Endothelial cell of umbilical vein (primary cell): ENCODE measurements at regions of chr1 and their contacts with region 1.

Region 1: DNA sequence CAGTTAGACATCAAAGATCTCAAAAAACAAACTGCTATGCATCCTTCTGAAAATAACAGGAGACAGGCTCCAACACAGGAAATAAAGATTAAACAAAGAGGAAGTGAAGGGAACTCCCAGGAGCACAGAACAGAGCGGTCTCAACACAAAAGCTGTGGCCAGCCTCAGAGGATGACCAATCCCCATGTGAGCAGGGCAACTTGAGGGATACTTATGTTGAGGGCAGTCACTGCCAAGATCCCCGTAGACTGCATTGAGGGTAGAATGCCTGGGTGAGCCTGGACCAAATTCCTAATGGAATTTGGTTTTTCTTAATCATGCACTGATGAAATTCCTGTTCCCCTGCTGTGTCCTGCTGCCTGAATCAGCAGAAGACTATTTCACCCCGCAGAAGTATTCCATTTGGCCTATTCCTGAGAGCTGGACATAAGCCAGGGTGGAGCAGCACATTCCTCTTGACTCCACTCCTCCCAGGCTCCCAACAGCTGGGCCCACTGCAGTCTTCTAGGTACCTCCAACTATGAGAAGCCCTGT is 49.0 kb downstream of the JAK1 start:
- DNase-seq: peak; percentile 91
- H3K4me3 ChIP-seq: peak overlapping the region in 1 of 3 experiments; percentile 6
- H3K27ac ChIP-seq: peak overlapping the region; percentile 86
- H3K4me1 ChIP-seq: peaks cover 54% of the 10 kb centered on the region
- H3K27me3 ChIP-seq: no peaks in the 10 kb centered on the region
- CTCF ChIP-seq: no peak
- POLR2A ChIP-seq: no peak

Region 2: GRCh38 chr1:64572222-64572900 is 345.0 kb before region 1 on chr1:
- CTCF ChIA-PET with region 1: no interaction called
- POLR2A ChIA-PET with region 1: no interaction called
- dilution Hi-C with region 1: no loop called
- intact Hi-C with region 1: no loop called
- DNase-seq: no peak
- H3K4me3 ChIP-seq: no peak overlapping the region
- H3K27ac ChIP-seq: no peak overlapping the region
- H3K4me1 ChIP-seq: no peaks in the 10 kb centered on the region
- H3K27me3 ChIP-seq: no peaks in the 10 kb centered on the region
- CTCF ChIP-seq: no peak
- POLR2A ChIP-seq: no peak

Region 3: DNA sequence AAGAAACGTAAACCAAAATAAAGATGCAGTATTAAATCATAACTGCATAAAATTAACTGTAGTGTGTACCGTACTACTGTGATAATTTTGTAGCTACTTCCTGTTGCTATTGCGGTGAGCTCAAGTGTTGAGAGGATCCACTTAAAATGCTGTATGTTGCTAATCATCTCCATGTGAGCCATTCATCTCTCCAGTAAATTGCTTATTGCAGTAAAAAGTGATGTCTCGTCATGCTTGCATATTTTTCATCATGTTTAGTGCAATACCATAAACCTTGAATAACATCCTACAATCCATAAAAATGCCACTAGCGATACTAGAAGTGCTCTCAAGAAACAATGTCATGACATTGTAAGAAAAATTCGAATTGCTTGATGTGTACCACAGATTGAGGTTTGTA is 106.3 kb before region 1 on chr1:
- CTCF ChIA-PET with region 1: no interaction called
- POLR2A ChIA-PET with region 1: no interaction called
- dilution Hi-C with region 1: no loop called
- intact Hi-C with region 1: no loop called
- DNase-seq: no peak
- H3K4me3 ChIP-seq: no peak overlapping the region
- H3K27ac ChIP-seq: no peak overlapping the region
- H3K4me1 ChIP-seq: no peaks in the 10 kb centered on the region
- H3K27me3 ChIP-seq: no peaks in the 10 kb centered on the region
- CTCF ChIP-seq: no peak
- POLR2A ChIP-seq: no peak

Region 4: DNA sequence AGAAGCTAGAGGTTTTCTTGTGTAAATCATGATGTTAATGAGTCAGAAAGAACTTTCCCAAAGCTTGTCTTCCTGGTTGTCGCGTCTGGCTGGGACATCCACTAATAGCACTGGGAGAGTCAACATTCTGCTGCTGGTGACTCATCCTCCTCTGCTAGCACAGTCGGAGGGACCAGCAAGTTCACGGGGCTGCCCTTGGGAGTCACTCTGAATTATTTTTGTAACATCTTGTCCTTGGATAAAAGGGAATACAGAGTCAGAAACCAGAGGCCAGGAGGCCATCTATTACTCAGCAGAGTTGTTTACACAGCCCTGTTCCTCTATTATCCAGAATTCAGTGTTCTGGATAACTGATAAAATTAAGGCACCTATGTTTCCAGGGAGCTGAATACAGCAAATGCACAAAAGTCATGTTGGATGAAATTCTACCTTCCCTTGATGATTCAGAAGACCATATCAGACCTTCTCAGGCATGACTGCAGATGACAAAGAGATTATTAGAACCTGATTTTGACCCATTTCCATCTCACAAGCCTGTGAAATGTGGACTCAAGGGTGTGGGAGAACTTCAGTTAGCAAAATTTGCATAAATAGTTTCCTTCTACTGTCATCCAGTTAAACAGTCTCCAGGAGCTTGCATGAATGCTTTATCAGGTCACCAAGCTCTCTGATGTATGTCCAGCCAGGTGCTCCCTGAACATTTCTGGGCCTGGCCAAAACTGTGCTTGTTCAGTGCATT is 19.1 kb before region 1 on chr1:
- CTCF ChIA-PET with region 1: interaction called, 6 read pairs
- POLR2A ChIA-PET with region 1: interaction called, 4 read pairs
- dilution Hi-C with region 1: no loop called
- intact Hi-C with region 1: loop called (anchors 1 kb)
- DNase-seq: peak; percentile 98
- H3K4me3 ChIP-seq: peak overlapping the region in 1 of 3 experiments; percentile 32
- H3K27ac ChIP-seq: peak overlapping the region; percentile 97
- H3K4me1 ChIP-seq: peaks cover 42% of the 10 kb centered on the region
- H3K27me3 ChIP-seq: no peaks in the 10 kb centered on the region
- CTCF ChIP-seq: no peak
- POLR2A ChIP-seq: peak; percentile 55